ENCODE measurements at regions of chr6 and their contacts with region 1.

Region 1: GRCh38 chr6:30541515-30542403 is 14.5 kb downstream of the GNL1 start:
- DNase-seq: peak; percentile 92
- ATAC-seq: peak; percentile 80
- H3K4me3 ChIP-seq: peak overlapping the region; percentile 44 to 73 (median 63)
- H3K4me3 Mint-ChIP-seq: peak overlapping the region; percentile 88
- H3K27ac ChIP-seq: peak overlapping the region; percentile 71 to 89
- H3K27ac Mint-ChIP-seq: peak overlapping the region; percentile 87
- H3K4me1 ChIP-seq: peaks cover 18 to 29% of the 10 kb centered on the region in 2 donors
- H3K4me1 Mint-ChIP-seq: peaks cover 30% of the 10 kb centered on the region
- H3K27me3 ChIP-seq: no peaks in the 10 kb centered on the region
- H3K27me3 Mint-ChIP-seq: no peaks in the 10 kb centered on the region
- CTCF ChIP-seq: peak; percentile 100

Region 2: GRCh38 chr6:30424549-30424948 is 117.2 kb before region 1 on chr6:
- CTCF ChIA-PET with region 1: no interaction called
- POLR2A ChIA-PET with region 1: no interaction called
- intact Hi-C with region 1: no loop called
- DNase-seq: no peak
- ATAC-seq: no peak
- H3K4me3 ChIP-seq: no peak overlapping the region
- H3K4me3 Mint-ChIP-seq: no peak overlapping the region
- H3K27ac ChIP-seq: no peak overlapping the region
- H3K27ac Mint-ChIP-seq: no peak overlapping the region
- H3K4me1 ChIP-seq: no peaks in the 10 kb centered on the region
- H3K4me1 Mint-ChIP-seq: no peaks in the 10 kb centered on the region
- H3K27me3 ChIP-seq: peaks cover 0 to 26% (median 15%) of the 10 kb centered on the region in 4 experiments
- H3K27me3 Mint-ChIP-seq: peaks cover 56% of the 10 kb centered on the region
- CTCF ChIP-seq: no peak

Region 3: DNA sequence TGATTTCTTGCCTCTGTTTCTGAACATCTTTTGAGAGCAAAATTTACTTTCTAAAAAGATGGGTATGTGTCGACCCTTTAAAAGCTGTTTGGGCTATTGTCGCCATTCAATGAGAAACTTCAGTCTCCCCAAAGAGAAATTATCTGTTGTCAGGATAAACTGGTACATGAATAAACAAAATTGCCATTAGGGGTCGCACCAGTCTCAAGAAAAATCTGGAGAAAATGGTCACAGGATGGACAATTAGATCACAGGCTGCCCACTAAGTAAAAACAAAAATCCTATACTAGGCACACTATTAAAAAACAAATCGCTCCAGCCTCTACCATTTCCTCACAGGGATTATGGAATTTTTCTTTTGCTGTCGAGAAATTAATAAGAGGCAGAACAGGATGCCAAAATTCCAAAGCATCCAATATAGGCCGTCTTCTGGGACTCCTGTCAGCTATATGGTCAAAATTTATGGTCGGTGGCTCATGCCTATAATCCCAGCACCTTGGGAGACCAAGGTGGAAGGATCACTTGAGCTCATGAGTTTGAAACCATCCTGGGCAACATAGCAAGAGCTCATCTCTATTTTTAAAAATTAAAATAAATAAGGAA is 58.0 kb before region 1 on chr6:
- CTCF ChIA-PET with region 1: interaction called, 681 read pairs
- POLR2A ChIA-PET with region 1: interaction called, 5 read pairs
- intact Hi-C with region 1: loop called (anchors 1 kb)
- DNase-seq: peak; percentile 76
- ATAC-seq: peak; percentile 23
- H3K4me3 ChIP-seq: no peak overlapping the region
- H3K4me3 Mint-ChIP-seq: no peak overlapping the region
- H3K27ac ChIP-seq: no peak overlapping the region
- H3K27ac Mint-ChIP-seq: no peak overlapping the region
- H3K4me1 ChIP-seq: peaks cover 24 to 28% of the 10 kb centered on the region in 2 donors
- H3K4me1 Mint-ChIP-seq: peaks cover 33% of the 10 kb centered on the region
- H3K27me3 ChIP-seq: peaks cover 0 to 28% (median 21%) of the 10 kb centered on the region in 4 experiments
- H3K27me3 Mint-ChIP-seq: peaks cover 33% of the 10 kb centered on the region
- CTCF ChIP-seq: peak; percentile 84

Region 4: DNA sequence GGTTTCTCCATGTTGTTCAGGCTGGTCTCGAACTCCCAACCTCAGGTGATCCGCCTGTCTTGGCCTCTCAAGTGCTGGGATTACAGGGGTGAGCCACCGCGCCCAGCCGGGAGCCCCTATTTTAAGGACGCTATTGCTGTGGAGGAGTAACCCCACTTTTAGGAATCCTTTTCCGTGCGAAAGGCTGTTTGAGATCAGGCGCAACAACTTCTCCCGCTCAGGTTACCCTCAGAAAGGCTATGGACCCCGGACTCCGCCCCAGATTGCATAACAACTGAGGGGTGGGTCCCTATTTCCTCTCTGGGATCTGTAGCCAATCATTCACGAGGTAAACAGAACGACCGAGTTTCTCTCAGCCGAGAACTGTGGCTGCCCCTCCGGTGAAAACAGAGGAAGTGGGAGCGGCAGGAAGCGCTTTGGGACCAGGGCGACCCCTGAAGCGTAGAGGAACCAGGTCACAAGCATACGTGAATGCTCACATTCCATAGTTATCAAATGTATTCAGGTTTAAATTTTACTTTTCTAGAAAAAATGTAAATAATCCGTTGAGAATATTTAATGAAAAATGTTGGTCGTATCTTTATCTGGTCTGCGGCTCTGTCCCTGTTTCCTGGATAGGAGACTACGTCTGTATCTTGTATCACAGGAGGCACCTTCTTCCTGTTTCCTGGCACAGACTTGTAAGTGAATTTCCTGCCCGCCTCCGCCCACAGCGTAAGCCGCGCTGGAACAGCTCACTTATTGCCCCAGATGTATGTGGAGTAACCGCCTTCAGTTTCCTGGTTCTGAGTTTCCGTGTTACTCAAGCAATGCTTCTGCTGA is 25.6 kb before region 1 on chr6:
- CTCF ChIA-PET with region 1: interaction called, 82 read pairs
- POLR2A ChIA-PET with region 1: interaction called, 16 read pairs
- intact Hi-C with region 1: no loop called
- DNase-seq: peak; percentile 95
- ATAC-seq: peak; percentile 85
- H3K4me3 ChIP-seq: peak overlapping the region; percentile 31 to 73 (median 58)
- H3K4me3 Mint-ChIP-seq: peak overlapping the region; percentile 90
- H3K27ac ChIP-seq: peak overlapping the region; percentile 88 to 99
- H3K27ac Mint-ChIP-seq: peak overlapping the region; percentile 99
- H3K4me1 ChIP-seq: peaks cover 34 to 66% of the 10 kb centered on the region in 2 donors
- H3K4me1 Mint-ChIP-seq: peaks cover 60% of the 10 kb centered on the region
- H3K27me3 ChIP-seq: no peaks in the 10 kb centered on the region
- H3K27me3 Mint-ChIP-seq: no peaks in the 10 kb centered on the region
- CTCF ChIP-seq: no peak

Region 5: GRCh38 chr6:30578051-30578450 is 36.3 kb after region 1 on chr6:
- CTCF ChIA-PET with region 1: interaction called, 11 read pairs
- POLR2A ChIA-PET with region 1: interaction called, 6 read pairs
- intact Hi-C with region 1: no loop called
- DNase-seq: no peak
- ATAC-seq: no peak
- H3K4me3 ChIP-seq: no peak overlapping the region
- H3K4me3 Mint-ChIP-seq: no peak overlapping the region
- H3K27ac ChIP-seq: no peak overlapping the region
- H3K27ac Mint-ChIP-seq: no peak overlapping the region
- H3K4me1 ChIP-seq: peaks cover 6 to 8% of the 10 kb centered on the region in 2 donors
- H3K4me1 Mint-ChIP-seq: peaks cover 22% of the 10 kb centered on the region
- H3K27me3 ChIP-seq: no peaks in the 10 kb centered on the region
- H3K27me3 Mint-ChIP-seq: no peaks in the 10 kb centered on the region
- CTCF ChIP-seq: no peak

Region 6: GRCh38 chr6:30672445-30673253 is 130.9 kb after region 1 on chr6 and contains the start of gene DHX16:
- CTCF ChIA-PET with region 1: interaction called, 13 read pairs
- POLR2A ChIA-PET with region 1: no interaction called
- intact Hi-C with region 1: loop called (anchors 1 kb)
- DNase-seq: peak; percentile 97
- ATAC-seq: peak; percentile 88
- H3K4me3 ChIP-seq: peak within 1 kb of the TSS; percentile 85 to 100 (median 98)
- H3K4me3 Mint-ChIP-seq: peak within 1 kb of the TSS; percentile 84
- H3K27ac ChIP-seq: peak within 1 kb of the TSS; percentile 54 to 75
- H3K27ac Mint-ChIP-seq: peak within 1 kb of the TSS; percentile 87
- H3K4me1 ChIP-seq: peaks cover 10 to 19% of the 10 kb centered on the region in 2 donors
- H3K4me1 Mint-ChIP-seq: peaks cover 29% of the 10 kb centered on the region
- H3K27me3 ChIP-seq: no peaks in the 10 kb centered on the region
- H3K27me3 Mint-ChIP-seq: no peaks in the 10 kb centered on the region
- CTCF ChIP-seq: peak; percentile 79
- total RNA-seq, gene DHX16: 51.1 and 58.3 TPM in 2 replicates

Region 7: GRCh38 chr6:31827286-31828079 is 1285.7 kb after region 1 on chr6 and contains the start of gene HSPA1B:
- CTCF ChIA-PET with region 1: no interaction called
- POLR2A ChIA-PET with region 1: interaction called, 10 read pairs
- intact Hi-C with region 1: no loop called
- DNase-seq: peak; percentile 92
- ATAC-seq: peak; percentile 72
- H3K4me3 ChIP-seq: peak within 1 kb of the TSS; percentile 69 to 93 (median 80)
- H3K4me3 Mint-ChIP-seq: peak within 1 kb of the TSS; percentile 85
- H3K27ac ChIP-seq: peak within 1 kb of the TSS; percentile 87 to 89
- H3K27ac Mint-ChIP-seq: peak within 1 kb of the TSS; percentile 96
- H3K4me1 ChIP-seq: peaks cover 19 to 41% of the 10 kb centered on the region in 2 donors
- H3K4me1 Mint-ChIP-seq: peaks cover 32% of the 10 kb centered on the region
- H3K27me3 ChIP-seq: no peaks in the 10 kb centered on the region
- H3K27me3 Mint-ChIP-seq: no peaks in the 10 kb centered on the region
- CTCF ChIP-seq: no peak
- total RNA-seq, gene HSPA1B: 79.2 and 89.9 TPM in 2 replicates

Measured in B cell (primary cell).